ENCODE measurements at regions of chr2 and their contacts with region 1.

Region 1: DNA sequence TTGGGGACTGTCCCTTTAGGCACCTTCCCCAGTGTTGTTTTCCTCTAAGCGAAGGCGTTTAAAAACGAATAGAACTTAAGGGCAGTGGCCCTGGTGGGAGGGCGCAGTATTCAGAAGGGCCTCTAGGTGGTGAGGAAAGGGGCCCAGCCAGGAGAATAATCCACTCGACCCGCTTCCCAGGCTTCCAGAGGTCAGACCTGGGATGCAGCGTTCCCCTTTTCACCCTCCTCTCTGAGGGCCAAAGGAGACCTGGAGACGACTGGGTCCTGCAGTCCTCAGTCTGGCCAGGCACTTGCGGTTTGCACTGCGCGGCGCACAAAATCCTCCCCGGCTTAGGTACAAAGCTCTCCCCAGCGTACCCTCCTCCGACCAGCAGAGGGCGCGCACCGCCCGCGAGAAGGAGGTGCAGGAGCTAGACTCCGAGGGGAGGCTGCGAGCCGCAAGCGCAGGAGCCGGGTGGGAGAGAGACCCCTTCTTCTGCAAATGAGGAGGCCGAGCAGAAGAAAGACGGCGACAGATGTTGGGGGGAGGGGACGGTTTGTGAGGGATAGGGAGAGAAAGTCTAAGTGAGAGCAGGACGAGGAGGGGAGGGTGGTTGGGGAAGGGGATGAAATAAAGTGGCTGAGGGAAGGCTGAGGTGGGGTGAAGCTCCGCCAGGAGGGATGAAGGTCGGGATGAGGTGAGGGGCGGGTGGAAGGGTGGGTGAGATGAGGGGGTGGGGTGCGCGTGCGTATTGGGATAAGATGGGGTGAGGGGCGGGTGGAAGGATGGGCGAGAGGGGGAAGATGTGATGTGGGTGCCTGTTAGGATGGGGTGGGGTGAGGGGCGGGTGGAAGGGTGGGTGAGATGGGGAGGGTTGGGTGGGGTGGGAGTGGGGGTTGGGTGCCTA is 4.9 kb downstream of the FEV start:
- DNase-seq: peak; percentile 54
- ATAC-seq: peak; percentile 89
- H3K4me3 ChIP-seq: peak overlapping the region; percentile 33 to 49
- H3K27ac ChIP-seq: no peak overlapping the region
- H3K4me1 ChIP-seq: peaks cover 12% of the 10 kb centered on the region
- H3K27me3 ChIP-seq: peaks cover 12% of the 10 kb centered on the region; the same call in 1 of the 2 replicates
- CTCF ChIP-seq: peak; percentile 98

Region 2: GRCh38 chr2:218852911-218853667 is 127.0 kb before region 1 on chr2:
- CTCF ChIA-PET with region 1: interaction called, 3 read pairs
- POLR2A ChIA-PET with region 1: no interaction called
- in situ Hi-C with region 1: no loop called
- intact Hi-C with region 1: loop called (anchors 5 kb)
- DNase-seq: peak; percentile 38
- ATAC-seq: peak; percentile 62
- H3K4me3 ChIP-seq: no peak overlapping the region
- H3K27ac ChIP-seq: no peak overlapping the region
- H3K4me1 ChIP-seq: peaks cover 17% of the 10 kb centered on the region
- H3K27me3 ChIP-seq: no peaks in the 10 kb centered on the region
- CTCF ChIP-seq: peak; percentile 90

Region 3: GRCh38 chr2:218876562-218877219 is 103.4 kb before region 1 on chr2:
- CTCF ChIA-PET with region 1: interaction called, 11 read pairs
- POLR2A ChIA-PET with region 1: no interaction called
- in situ Hi-C with region 1: no loop called
- intact Hi-C with region 1: no loop called
- DNase-seq: peak; percentile 70
- ATAC-seq: peak; percentile 66
- H3K4me3 ChIP-seq: no peak overlapping the region
- H3K27ac ChIP-seq: no peak overlapping the region
- H3K4me1 ChIP-seq: peaks cover 24% of the 10 kb centered on the region
- H3K27me3 ChIP-seq: no peaks in the 10 kb centered on the region
- CTCF ChIP-seq: peak; percentile 96

Region 4: DNA sequence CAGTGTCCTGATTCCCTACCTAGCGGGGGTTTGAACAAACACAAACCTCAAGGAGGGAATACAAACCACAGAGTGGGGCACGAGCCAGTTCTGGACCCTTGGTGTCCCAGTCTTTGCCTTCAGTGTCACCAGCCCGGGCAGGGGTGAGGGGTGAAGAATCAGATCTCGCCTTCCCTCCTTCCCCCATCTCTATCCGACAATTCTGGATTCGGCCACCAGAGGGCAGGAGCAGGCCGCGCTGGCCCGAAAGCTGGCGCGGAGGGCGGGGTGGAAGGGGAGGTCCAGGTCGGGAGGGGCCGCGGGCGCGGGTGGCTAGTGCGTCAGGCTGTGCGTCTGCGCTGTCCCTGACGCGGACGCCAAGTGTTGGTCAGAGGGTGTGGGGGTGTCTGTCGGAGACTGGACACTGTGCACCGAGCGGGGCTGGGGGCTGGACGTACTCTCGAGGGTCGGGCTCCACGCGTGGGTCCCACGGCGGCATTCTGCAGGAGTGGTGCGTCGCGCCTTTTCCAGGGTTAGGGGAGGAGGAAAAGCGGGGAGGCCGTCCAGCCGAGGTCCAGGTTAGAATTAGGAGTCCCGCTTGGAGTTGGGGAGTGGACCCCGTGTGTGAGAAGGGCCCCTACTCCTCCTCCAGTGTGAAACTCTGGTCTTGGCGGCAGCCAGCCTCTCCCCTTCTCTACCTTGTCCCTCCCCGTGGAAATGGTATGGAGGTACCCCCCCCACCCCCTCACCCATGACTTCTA is 16.1 kb after region 1 on chr2:
- CTCF ChIA-PET with region 1: interaction called, 20 read pairs
- POLR2A ChIA-PET with region 1: no interaction called
- in situ Hi-C with region 1: no loop called
- intact Hi-C with region 1: no loop called
- DNase-seq: peak; percentile 41
- ATAC-seq: peak; percentile 95
- H3K4me3 ChIP-seq: peak overlapping the region; percentile 51 to 62
- H3K27ac ChIP-seq: peak overlapping the region; percentile 48; the same call in 1 of the 2 replicates
- H3K4me1 ChIP-seq: peaks cover 4% of the 10 kb centered on the region; the same call in 1 of the 2 replicates
- H3K27me3 ChIP-seq: peaks cover 2% of the 10 kb centered on the region; the same call in 1 of the 2 replicates
- CTCF ChIP-seq: peak; percentile 96

Region 5: GRCh38 chr2:219076253-219076652 is 96.2 kb after region 1 on chr2:
- CTCF ChIA-PET with region 1: interaction called, 14 read pairs
- POLR2A ChIA-PET with region 1: no interaction called
- in situ Hi-C with region 1: no loop called
- intact Hi-C with region 1: no loop called
- DNase-seq: no peak
- ATAC-seq: no peak
- H3K4me3 ChIP-seq: no peak overlapping the region
- H3K27ac ChIP-seq: no peak overlapping the region
- H3K4me1 ChIP-seq: no peaks in the 10 kb centered on the region
- H3K27me3 ChIP-seq: no peaks in the 10 kb centered on the region
- CTCF ChIP-seq: no peak

Measured in Panc1 (cell line).